Activated naive CD4-positive, alpha-beta T cell treated with anti-CD3 and anti-CD28 coated beads, Interleukin-2, amount 10 ng/mL, durations not matched to agents 7 days and 5 days (primary cell): ENCODE measurements at regions of chr18 and their contacts with region 1.

Region 1: DNA sequence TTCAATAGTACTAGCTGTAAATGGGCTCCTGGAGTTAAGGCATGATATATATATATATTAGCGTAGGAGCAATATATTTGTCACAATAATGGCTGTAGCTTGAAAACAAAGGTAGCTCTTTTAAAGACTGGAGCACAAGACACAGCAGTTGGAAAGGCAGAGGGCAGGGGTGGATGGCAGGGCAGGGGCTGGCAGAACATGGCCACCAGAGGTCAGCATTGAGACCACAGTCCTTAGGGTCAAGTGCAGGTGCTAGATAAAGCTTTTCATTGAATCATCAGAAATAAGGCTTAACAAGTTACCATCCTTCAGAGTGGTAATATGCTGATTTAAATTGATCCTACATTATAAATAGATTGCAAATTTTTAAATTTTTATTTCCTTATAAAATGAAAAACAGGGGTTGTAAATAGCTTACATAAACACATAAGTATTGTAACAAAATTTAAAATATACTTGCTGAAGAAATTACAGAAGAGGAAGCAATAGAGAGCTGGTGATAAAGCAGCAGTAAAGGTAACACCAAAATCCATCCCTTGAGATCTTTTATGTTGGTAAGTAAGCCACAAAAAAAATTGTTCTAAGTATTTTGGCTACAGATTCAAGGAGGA is 161.2 kb upstream of the PIEZO2 start:
- DNase-seq: peak; percentile 37
- H3K4me3 Mint-ChIP-seq: no peak overlapping the region
- H3K27ac Mint-ChIP-seq: no peak overlapping the region
- H3K4me1 Mint-ChIP-seq: no peaks in the 10 kb centered on the region
- H3K27me3 Mint-ChIP-seq: no peaks in the 10 kb centered on the region

Region 2: GRCh38 chr18:11553098-11553940 is 242.7 kb after region 1 on chr18:
- CTCF ChIA-PET with region 1: interaction called, 30 read pairs
- DNase-seq: peak; percentile 50
- H3K4me3 Mint-ChIP-seq: no peak overlapping the region
- H3K27ac Mint-ChIP-seq: no peak overlapping the region
- H3K4me1 Mint-ChIP-seq: no peaks in the 10 kb centered on the region
- H3K27me3 Mint-ChIP-seq: peaks cover 12% of the 10 kb centered on the region

Region 3: GRCh38 chr18:11591957-11592356 is 281.4 kb after region 1 on chr18:
- CTCF ChIA-PET with region 1: no interaction called
- DNase-seq: no peak
- H3K4me3 Mint-ChIP-seq: no peak overlapping the region
- H3K27ac Mint-ChIP-seq: no peak overlapping the region
- H3K4me1 Mint-ChIP-seq: peaks cover 19% of the 10 kb centered on the region
- H3K27me3 Mint-ChIP-seq: peaks cover 11% of the 10 kb centered on the region